Ascending aorta (tissue), 2 donors: ENCODE measurements at regions of chr6 and their contacts with region 1.

Region 1: GRCh38 chr6:121557159-121557932 is 121.9 kb downstream of the GJA1 start:
- DNase-seq: no peak
- H3K4me3 ChIP-seq: no peak overlapping the region
- H3K27ac ChIP-seq: no peak overlapping the region
- H3K4me1 ChIP-seq: no peaks in the 10 kb centered on the region
- H3K27me3 ChIP-seq: no peaks in the 10 kb centered on the region
- CTCF ChIP-seq: no peak

Region 2: DNA sequence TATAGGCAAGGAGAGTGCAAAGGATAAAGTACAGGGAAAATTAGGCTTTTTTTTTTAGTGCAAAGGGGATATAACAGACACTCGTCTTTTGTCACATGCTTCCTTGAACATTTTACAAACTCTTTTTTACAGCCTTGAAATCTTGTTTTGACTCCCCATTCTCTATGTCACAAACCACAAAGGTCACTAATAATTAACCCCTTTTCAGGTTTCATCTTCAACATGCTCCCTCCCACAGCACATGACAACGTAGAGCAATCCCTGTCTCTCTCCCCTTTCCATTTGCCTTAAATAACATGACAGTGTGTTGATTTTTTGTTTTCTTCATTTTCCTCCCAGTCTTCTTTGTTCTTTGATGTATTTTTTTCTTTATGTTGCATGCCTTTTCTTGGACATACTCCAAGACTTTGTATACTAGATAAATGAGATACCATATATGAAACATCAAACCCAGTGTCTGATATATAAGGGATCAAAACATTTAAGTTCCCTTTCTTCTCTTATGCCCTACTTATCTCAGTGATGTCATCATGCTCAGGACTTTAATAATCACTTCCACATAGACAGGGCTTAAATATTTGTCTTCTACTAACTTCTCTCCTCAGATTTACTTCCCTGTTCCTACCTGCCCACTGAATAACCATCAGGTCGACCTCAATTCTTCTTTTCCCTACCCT is 463.4 kb after region 1 on chr6:
- intact Hi-C with region 1: no loop called
- DNase-seq: no peak
- H3K4me3 ChIP-seq: no peak overlapping the region
- H3K27ac ChIP-seq: no peak overlapping the region
- H3K4me1 ChIP-seq: no peaks in the 10 kb centered on the region
- H3K27me3 ChIP-seq: no peaks in the 10 kb centered on the region
- CTCF ChIP-seq: no peak

Region 3: GRCh38 chr6:122122686-122123085 is 565.3 kb after region 1 on chr6:
- intact Hi-C with region 1: loop called (anchors 5 kb)
- DNase-seq: no peak
- H3K4me3 ChIP-seq: no peak overlapping the region
- H3K27ac ChIP-seq: no peak overlapping the region
- H3K4me1 ChIP-seq: peaks cover 0 to 7% of the 10 kb centered on the region in 2 donors
- H3K27me3 ChIP-seq: no peaks in the 10 kb centered on the region
- CTCF ChIP-seq: no peak